Activated naive CD8-positive, alpha-beta T cell treated with anti-CD3 and anti-CD28 coated beads, Interleukin-2, amount 10 ng/mL, durations not matched to agents 7 days and 5 days (primary cell): ENCODE measurements at regions of chr4 and their contacts with region 1.

Region 1: DNA sequence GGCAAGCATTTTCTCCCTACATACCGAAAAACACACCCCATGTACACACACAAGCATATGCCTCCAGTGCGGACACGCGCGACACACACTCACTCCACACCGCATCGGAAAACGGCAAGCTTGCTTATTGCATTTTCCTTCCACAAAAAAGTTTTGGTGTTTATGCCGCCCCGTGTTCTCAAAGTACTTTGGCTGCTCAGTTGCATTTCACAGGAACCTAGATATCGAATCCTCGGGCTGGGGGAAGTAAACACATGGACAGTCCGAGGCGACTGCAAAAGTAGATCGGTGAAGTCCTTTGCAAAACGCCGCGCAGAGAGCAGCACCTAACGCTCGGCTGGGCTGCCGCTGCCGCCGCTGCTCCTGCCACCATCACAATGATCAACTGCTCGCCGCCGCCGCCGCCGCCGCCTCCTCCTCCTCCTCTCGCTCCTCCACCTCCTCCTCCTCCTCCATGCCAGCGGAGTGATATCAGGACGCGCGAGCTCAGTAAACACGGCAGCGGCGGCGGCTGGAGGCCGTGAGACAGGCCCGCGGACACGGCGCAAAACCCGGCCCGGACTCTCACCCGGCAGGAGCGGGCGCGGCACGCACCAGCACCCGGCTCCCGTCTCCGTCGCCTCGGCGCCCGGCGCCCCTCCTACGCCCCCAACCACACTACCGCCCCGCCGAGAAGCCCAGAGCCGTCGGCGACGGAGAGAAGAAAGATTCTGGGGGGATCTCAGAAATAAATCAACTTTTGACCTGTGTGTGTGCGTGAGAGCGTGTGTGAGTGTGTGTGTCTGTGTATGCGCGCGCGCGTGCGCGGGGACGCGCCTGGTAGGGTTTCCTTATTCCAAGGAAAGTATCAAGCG is at the start of gene MAML3:
- DNase-seq: peak; percentile 90
- ATAC-seq: peak; percentile 39
- H3K4me3 Mint-ChIP-seq: peak within 1 kb of the TSS; percentile 96
- H3K27ac Mint-ChIP-seq: peak within 1 kb of the TSS; percentile 88
- H3K4me1 Mint-ChIP-seq: peaks cover 36% of the 10 kb centered on the region
- H3K27me3 Mint-ChIP-seq: peaks cover 1% of the 10 kb centered on the region
- total RNA-seq, gene MAML3: 4.6 to 4.7 TPM

Region 2: DNA sequence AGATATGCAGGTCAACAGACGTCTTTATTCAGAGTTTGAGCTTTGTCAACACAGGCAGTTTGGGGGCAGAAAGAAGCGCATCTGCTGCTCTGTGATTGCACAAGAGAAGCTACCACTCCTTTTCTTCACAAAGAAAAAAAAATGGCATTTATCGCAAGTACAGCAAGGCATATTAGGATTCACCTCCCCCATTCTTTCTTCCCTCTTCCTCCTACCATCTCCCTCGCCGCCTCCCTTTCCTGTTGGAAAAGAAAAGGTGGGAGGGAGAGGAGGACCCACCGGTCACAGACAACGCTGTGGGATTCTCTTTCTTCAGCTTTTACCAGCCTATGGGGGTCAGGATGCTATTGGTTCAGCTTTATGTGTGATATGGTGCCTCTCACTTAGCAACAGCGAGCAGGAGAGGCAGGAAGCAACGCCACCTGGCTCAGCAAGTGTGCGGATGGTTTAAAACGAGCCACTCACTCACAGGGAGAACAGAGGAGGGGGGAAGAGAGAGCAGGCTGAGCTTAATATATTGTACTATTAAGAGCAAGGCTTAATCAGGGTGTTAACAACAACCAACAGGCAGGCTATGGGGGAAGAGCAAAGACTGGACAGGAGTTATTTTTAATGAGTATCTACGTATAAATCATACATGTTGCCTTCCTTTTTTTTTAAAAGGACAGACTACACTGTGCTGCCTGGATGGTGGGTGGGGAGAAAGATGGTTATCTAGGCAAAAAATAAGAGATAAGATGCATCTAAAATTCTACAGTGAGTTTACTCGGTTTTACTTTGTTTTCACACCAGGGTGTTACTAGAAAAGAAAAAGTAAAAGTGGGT is 104.7 kb before region 1 on chr4:
- POLR2A ChIA-PET with region 1: interaction called, 11 read pairs
- DNase-seq: peak; percentile 46
- ATAC-seq: peak; percentile 93
- H3K4me3 Mint-ChIP-seq: peak overlapping the region; percentile 91
- H3K27ac Mint-ChIP-seq: peak overlapping the region; percentile 92
- H3K4me1 Mint-ChIP-seq: peaks cover 55% of the 10 kb centered on the region
- H3K27me3 Mint-ChIP-seq: no peaks in the 10 kb centered on the region

Region 3: GRCh38 chr4:140095694-140096482 is 58.1 kb before region 1 on chr4:
- POLR2A ChIA-PET with region 1: interaction called, 59 read pairs
- DNase-seq: peak; percentile 68
- ATAC-seq: peak; percentile 71
- H3K4me3 Mint-ChIP-seq: peak overlapping the region; percentile 87
- H3K27ac Mint-ChIP-seq: peak overlapping the region; percentile 96
- H3K4me1 Mint-ChIP-seq: peaks cover 78% of the 10 kb centered on the region
- H3K27me3 Mint-ChIP-seq: no peaks in the 10 kb centered on the region

Region 4: GRCh38 chr4:140116442-140117104 is 37.4 kb before region 1 on chr4:
- POLR2A ChIA-PET with region 1: interaction called, 11 read pairs
- DNase-seq: no peak
- ATAC-seq: peak; percentile 99
- H3K4me3 Mint-ChIP-seq: peak overlapping the region; percentile 63
- H3K27ac Mint-ChIP-seq: peak overlapping the region; percentile 91
- H3K4me1 Mint-ChIP-seq: peaks cover 29% of the 10 kb centered on the region
- H3K27me3 Mint-ChIP-seq: no peaks in the 10 kb centered on the region

Region 5: GRCh38 chr4:140243278-140243753 is 89.4 kb after region 1 on chr4:
- POLR2A ChIA-PET with region 1: interaction called, 12 read pairs
- DNase-seq: no peak
- ATAC-seq: peak; percentile 84
- H3K4me3 Mint-ChIP-seq: peak overlapping the region; percentile 80
- H3K27ac Mint-ChIP-seq: peak overlapping the region; percentile 91
- H3K4me1 Mint-ChIP-seq: peaks cover 28% of the 10 kb centered on the region
- H3K27me3 Mint-ChIP-seq: no peaks in the 10 kb centered on the region